ENCODE measurements at regions of chr16 and their contacts with region 1.

Region 1: GRCh38 chr16:50093607-50094539 is 28.1 kb downstream of the HEATR3 start:
- DNase-seq: no peak
- ATAC-seq: no peak
- H3K4me3 ChIP-seq: no peak overlapping the region
- H3K27ac ChIP-seq: no peak overlapping the region
- H3K4me1 ChIP-seq: no peaks in the 10 kb centered on the region
- H3K27me3 ChIP-seq: no peaks in the 10 kb centered on the region
- CTCF ChIP-seq: no peak

Region 2: GRCh38 chr16:49875812-49876715 is 217.8 kb before region 1 on chr16:
- CTCF ChIA-PET with region 1: interaction called, 13 read pairs
- POLR2A ChIA-PET with region 1: no interaction called
- in situ Hi-C with region 1: no loop called
- intact Hi-C with region 1: no loop called
- DNase-seq: no peak
- ATAC-seq: no peak
- H3K4me3 ChIP-seq: no peak overlapping the region
- H3K27ac ChIP-seq: no peak overlapping the region
- H3K4me1 ChIP-seq: no peaks in the 10 kb centered on the region
- H3K27me3 ChIP-seq: peaks cover 3% of the 10 kb centered on the region; the same call in 1 of the 2 replicates
- CTCF ChIP-seq: no peak

Measured in Panc1 (cell line).